Activated B cell treated with CpG ODN at 0.5 μM for 24 hours (primary cell): ENCODE measurements at regions of chr11 and their contacts with region 1.

Region 1: DNA sequence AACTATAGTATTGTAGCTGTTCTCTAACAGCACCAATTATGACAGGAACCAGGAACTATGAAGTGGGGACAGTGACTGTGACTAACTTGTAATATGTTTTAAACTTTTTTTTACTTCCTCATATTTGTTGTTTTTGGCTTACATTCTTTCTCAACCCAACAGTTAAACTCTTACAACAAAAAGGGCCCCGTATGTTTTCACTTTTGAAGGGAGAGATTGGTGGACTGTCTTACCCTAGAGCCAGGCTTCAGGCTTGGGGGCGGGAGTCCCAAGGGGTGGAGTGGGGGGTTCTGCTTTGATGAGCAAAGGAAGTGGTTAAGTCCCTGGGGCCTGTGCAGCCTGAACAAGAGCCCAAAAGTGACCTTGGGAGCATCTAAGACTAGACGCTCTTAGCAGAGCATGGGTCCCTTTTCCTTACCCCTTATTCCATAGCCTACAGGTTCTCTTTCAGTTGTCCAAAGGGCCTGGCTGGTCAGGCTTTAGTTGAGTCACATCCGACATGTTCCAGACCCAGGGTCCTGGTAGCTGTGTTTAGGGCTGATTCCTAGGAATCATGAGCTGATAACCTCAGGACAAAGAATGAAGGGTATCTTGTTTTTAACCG is 38.8 kb downstream of the STIM1 start:
- DNase-seq: peak; percentile 84
- ATAC-seq: peak; percentile 97
- H3K4me3 Mint-ChIP-seq: peak overlapping the region; percentile 74
- H3K27ac Mint-ChIP-seq: peak overlapping the region; percentile 88
- H3K4me1 Mint-ChIP-seq: peaks cover 72% of the 10 kb centered on the region
- H3K27me3 Mint-ChIP-seq: no peaks in the 10 kb centered on the region
- CTCF ChIP-seq: no peak

Region 2: DNA sequence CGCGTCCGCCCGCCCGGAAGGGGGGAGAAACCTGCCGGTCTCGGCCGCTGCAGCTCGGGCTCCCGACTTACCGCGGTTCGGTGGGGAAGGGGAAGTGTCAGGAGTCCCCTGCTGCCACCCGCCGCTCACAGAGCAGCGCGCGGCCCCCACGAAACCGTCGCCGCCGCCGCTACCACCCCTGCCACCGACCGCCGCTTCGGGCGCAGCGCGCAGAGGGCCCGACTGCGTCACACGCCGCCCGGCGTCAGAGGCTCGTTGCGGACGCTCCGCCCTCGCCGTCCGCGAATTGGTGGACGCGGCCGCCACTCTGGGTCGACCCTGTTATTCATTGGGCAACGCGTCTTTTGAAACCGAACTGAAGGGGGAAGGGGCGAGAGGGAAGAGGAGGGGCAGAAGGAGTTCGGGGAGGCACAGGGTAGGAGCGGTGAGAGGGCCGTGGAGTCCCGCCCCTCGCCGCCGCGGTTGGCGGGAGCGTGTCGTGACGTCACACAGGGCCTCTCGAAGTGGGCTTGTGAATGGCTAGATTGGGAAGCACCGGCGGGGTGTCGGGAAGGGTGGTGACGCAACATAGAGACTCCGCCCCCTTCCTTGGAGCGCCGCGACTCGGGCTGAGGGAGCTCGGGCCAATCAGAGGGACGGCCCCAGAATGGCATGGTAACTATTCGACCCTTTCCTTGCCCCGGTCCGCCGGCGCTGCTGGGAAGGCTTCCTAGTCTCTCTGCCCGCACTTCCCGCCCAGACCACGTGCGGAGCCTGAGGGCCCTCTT is 96.7 kb before region 1 on chr11 and contains the start of gene NUP98:
- CTCF ChIA-PET with region 1: no interaction called
- POLR2A ChIA-PET with region 1: no interaction called
- intact Hi-C with region 1: loop called (anchors 2 kb)
- DNase-seq: peak; percentile 99
- ATAC-seq: peak; percentile 93
- H3K4me3 Mint-ChIP-seq: peak within 1 kb of the TSS; percentile 98
- H3K27ac Mint-ChIP-seq: peak within 1 kb of the TSS; percentile 99
- H3K4me1 Mint-ChIP-seq: peaks cover 43% of the 10 kb centered on the region
- H3K27me3 Mint-ChIP-seq: no peaks in the 10 kb centered on the region
- CTCF ChIP-seq: no peak
- total RNA-seq, gene NUP98: 98.0 and 117 TPM in 2 replicates

Region 3: DNA sequence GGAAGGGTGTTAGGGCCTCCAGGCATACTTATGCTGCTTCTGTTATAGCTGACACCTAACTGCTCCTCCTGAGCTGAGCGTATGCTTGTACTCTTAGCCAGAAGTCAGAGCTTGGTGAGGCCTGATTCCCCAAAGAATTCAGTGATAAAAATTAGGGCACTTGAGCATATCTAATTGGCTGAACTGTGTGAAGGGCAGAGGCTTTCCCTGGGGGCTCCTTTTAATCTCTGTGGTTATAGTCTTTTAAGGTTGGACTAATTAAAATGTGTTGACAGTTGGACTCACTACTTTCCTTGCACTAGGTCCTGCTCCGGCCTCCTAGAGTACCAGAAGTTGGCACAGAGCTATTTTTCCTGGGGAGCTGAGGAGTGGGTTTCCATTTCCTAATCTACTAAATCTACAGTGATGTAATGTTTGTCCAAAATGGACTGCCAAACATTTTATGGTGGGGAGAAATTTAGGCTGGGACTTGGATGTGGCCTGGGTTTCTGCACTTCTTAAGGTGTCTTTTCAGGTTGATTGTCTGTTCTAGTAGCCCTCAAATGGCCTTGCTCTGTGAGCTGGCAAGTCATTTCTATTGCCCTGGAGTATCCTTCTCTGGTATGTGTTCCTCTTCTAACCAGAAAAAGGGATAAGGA is 20.4 kb before region 1 on chr11:
- CTCF ChIA-PET with region 1: interaction called, 3 read pairs
- POLR2A ChIA-PET with region 1: interaction called, 11 read pairs
- intact Hi-C with region 1: no loop called
- DNase-seq: no peak
- ATAC-seq: peak; percentile 82
- H3K4me3 Mint-ChIP-seq: peak overlapping the region; percentile 20
- H3K27ac Mint-ChIP-seq: peak overlapping the region; percentile 50
- H3K4me1 Mint-ChIP-seq: peaks cover 85% of the 10 kb centered on the region
- H3K27me3 Mint-ChIP-seq: no peaks in the 10 kb centered on the region
- CTCF ChIP-seq: no peak

Region 4: DNA sequence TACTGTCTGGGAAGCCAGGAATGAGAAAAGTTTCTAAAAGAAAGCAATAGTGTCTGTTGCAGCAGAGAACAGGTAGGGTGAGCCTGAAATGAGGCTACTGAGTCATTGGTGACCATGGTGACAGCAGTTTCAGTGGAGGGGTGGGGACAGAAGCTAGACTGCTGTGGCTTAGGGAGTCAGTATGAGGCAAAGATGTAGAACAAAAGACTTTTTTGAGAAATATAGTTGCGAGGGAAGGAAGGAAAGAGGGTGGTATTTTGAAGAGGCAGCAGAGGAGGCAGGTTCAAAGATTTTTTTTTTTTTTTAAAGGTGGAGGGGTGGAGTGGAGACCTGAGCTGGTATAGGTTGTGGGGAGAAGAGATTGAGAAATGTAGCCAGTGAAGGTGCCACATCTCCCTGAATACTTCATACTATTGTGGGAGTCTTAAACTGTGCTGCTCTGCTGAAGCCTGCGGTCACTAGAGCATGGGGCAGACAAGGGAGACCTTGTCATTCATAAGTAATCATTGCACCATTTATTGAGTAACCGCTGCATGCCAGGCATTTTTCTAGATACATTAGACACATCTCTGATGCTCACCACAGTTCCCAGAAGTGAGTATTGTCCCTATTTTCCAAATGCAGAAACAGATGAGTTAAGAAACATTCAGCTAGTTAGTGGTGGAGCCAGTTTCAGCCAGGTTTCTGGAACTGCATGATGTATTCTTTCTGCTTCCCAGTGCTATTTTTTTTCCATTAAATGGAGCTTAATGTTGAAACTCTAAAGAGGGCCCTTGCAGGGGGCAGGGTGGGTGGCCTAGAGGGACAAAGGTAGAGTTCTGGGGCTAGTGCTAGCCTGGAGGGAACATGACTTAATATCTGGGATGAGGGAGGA is 11.1 kb after region 1 on chr11:
- CTCF ChIA-PET with region 1: interaction called, 3 read pairs
- POLR2A ChIA-PET with region 1: interaction called, 13 read pairs
- intact Hi-C with region 1: loop called (anchors 1 kb)
- DNase-seq: no peak
- ATAC-seq: peak; percentile 79
- H3K4me3 Mint-ChIP-seq: peak overlapping the region; percentile 17
- H3K27ac Mint-ChIP-seq: peak overlapping the region; percentile 8
- H3K4me1 Mint-ChIP-seq: peaks cover 84% of the 10 kb centered on the region
- H3K27me3 Mint-ChIP-seq: no peaks in the 10 kb centered on the region
- CTCF ChIP-seq: no peak

Region 5: GRCh38 chr11:3947061-3947460 is 52.8 kb after region 1 on chr11:
- CTCF ChIA-PET with region 1: no interaction called
- POLR2A ChIA-PET with region 1: interaction called, 11 read pairs
- intact Hi-C with region 1: loop called (anchors 1 kb)
- DNase-seq: no peak
- ATAC-seq: peak; percentile 59
- H3K4me3 Mint-ChIP-seq: peak overlapping the region; percentile 13
- H3K27ac Mint-ChIP-seq: peak overlapping the region; percentile 70
- H3K4me1 Mint-ChIP-seq: peaks cover 92% of the 10 kb centered on the region
- H3K27me3 Mint-ChIP-seq: no peaks in the 10 kb centered on the region
- CTCF ChIP-seq: no peak

Region 6: DNA sequence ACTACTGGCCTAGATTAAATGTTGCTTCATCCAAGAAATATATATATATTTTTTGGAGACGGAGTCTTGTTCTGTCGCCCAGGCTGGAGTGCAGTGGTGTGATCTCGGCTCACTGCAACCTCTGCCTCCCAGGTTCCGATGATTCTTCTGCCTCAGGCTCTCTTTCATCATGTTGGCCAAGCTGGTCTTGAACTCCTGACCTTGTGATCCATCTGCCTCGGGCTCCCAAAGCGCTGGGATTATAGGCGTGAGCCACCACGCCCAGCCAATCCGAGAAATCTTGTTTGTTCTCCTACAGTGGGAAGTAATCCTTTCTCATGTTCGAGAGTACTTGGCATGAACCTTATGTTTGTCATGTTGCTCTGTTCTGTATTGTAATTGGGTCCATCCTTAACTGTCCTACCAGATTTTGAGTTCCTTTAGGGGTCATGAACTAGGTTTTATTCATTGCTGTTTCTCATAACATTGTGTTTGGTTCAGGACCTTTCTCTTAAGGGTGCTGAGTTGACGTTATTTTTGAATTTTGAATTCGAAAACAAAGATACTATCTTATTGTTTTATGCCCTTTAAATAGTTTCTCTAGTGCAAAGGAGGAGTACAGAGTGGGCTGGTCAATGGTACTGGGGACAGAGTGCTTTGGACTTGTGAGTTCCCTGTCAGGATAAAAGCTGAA is 86.9 kb after region 1 on chr11:
- CTCF ChIA-PET with region 1: no interaction called
- POLR2A ChIA-PET with region 1: no interaction called
- intact Hi-C with region 1: no loop called
- DNase-seq: no peak
- ATAC-seq: no peak
- H3K4me3 Mint-ChIP-seq: no peak overlapping the region
- H3K27ac Mint-ChIP-seq: no peak overlapping the region
- H3K4me1 Mint-ChIP-seq: peaks cover 34% of the 10 kb centered on the region
- H3K27me3 Mint-ChIP-seq: no peaks in the 10 kb centered on the region
- CTCF ChIP-seq: no peak

Region 7: GRCh38 chr11:4060182-4060923 is 166.1 kb after region 1 on chr11:
- CTCF ChIA-PET with region 1: interaction called, 4 read pairs
- POLR2A ChIA-PET with region 1: interaction called, 3 read pairs
- intact Hi-C with region 1: loop called (anchors 1 kb)
- DNase-seq: no peak
- ATAC-seq: no peak
- H3K4me3 Mint-ChIP-seq: no peak overlapping the region
- H3K27ac Mint-ChIP-seq: no peak overlapping the region
- H3K4me1 Mint-ChIP-seq: peaks cover 27% of the 10 kb centered on the region
- H3K27me3 Mint-ChIP-seq: no peaks in the 10 kb centered on the region
- CTCF ChIP-seq: no peak